Breast epithelium (tissue), 4 donors: ENCODE measurements at regions of chr12 and their contacts with region 1.

Region 1: DNA sequence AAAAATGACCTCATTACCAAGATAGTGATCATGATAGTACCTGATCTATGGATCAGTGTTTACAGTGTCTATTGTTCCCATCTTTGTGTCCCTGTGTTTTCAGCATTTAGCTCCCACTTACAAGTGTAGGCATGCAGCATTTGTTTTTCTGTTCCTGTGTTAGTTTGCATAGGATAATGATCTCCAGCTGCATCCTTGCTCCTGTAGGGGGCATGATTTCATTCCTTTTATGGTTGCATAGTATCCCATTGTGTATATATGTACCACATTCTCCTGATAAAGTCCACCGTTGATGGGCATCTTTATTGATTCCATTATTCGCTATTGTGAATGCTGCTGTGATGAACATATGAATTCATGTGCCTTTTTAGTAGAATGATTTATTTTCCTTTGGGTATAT is 215.4 kb upstream of the NAV3 start:
- DNase-seq: no peak
- H3K4me3 ChIP-seq: no peak overlapping the region
- H3K27ac ChIP-seq: no peak overlapping the region
- H3K4me1 ChIP-seq: no peaks in the 10 kb centered on the region
- H3K27me3 ChIP-seq: no peaks in the 10 kb centered on the region
- CTCF ChIP-seq: no peak
- POLR2A ChIP-seq: no peak

Region 2: GRCh38 chr12:77537648-77538047 is 77.7 kb before region 1 on chr12:
- intact Hi-C with region 1: loop called (anchors 2 kb)
- DNase-seq: no peak
- H3K4me3 ChIP-seq: no peak overlapping the region
- H3K27ac ChIP-seq: no peak overlapping the region
- H3K4me1 ChIP-seq: no peaks in the 10 kb centered on the region
- H3K27me3 ChIP-seq: no peaks in the 10 kb centered on the region
- CTCF ChIP-seq: no peak
- POLR2A ChIP-seq: no peak

Region 3: GRCh38 chr12:77599782-77600467 is 15.4 kb before region 1 on chr12:
- intact Hi-C with region 1: no loop called
- DNase-seq: no peak
- H3K4me3 ChIP-seq: no peak overlapping the region
- H3K27ac ChIP-seq: no peak overlapping the region
- H3K4me1 ChIP-seq: no peaks in the 10 kb centered on the region
- H3K27me3 ChIP-seq: no peaks in the 10 kb centered on the region
- CTCF ChIP-seq: no peak
- POLR2A ChIP-seq: no peak

Region 4: GRCh38 chr12:77645966-77646598 is 30.8 kb after region 1 on chr12:
- intact Hi-C with region 1: no loop called
- DNase-seq: no peak
- H3K4me3 ChIP-seq: no peak overlapping the region
- H3K27ac ChIP-seq: no peak overlapping the region
- H3K4me1 ChIP-seq: no peaks in the 10 kb centered on the region
- H3K27me3 ChIP-seq: no peaks in the 10 kb centered on the region
- CTCF ChIP-seq: no peak
- POLR2A ChIP-seq: no peak